CD8-positive, alpha-beta T cell (primary cell): ENCODE measurements at regions of chr11 and their contacts with region 1.

Region 1: GRCh38 chr11:36376888-36377758 is 81.0 kb downstream of the PRR5L start:
- DNase-seq: peak; percentile 21 to 82 (median 53)
- ATAC-seq: peak; percentile 63
- H3K4me3 ChIP-seq: peak overlapping the region; percentile 47 to 85
- H3K4me3 Mint-ChIP-seq: peak overlapping the region; percentile 92
- H3K27ac ChIP-seq: peak overlapping the region; percentile 48 to 76
- H3K27ac Mint-ChIP-seq: peak overlapping the region; percentile 91
- H3K4me1 ChIP-seq: peaks cover 3% of the 10 kb centered on the region
- H3K4me1 Mint-ChIP-seq: peaks cover 37% of the 10 kb centered on the region
- H3K27me3 ChIP-seq: peaks cover 0 to 2% of the 10 kb centered on the region in 2 experiments
- H3K27me3 Mint-ChIP-seq: peaks cover 27% of the 10 kb centered on the region
- CTCF ChIP-seq: peak; percentile 32

Region 2: DNA sequence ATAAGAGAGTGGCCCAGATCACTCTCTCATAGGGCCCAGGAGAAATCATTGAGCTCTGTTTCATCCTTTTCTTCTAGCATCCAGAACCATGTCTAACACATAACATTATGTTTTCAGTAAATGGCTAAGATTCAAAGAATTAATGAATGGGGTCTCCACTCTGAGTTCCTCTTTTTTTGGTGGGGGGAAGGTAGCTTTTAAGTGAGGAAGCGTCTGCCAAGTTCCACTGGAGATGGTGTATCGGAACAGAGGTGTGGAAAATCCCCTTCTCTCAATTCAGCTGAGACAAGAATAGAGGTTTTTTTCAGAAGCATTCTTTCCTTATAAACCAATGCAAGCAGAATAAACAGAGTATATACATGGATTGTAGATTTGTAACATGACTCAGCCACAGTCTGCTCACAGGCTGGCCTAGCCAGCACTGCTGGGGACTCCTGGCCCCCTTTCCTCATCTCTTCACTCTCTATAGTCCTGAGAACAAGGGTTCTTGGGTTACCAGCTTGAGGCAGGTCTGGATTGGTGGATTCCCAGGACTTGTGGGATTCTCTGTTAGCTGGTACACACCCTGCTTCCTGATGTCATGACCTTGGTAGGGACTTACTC is 35.8 kb after region 1 on chr11:
- CTCF ChIA-PET with region 1: no interaction called
- POLR2A ChIA-PET with region 1: interaction called, 3 read pairs
- intact Hi-C with region 1: loop called in 1 of 2 experiments (anchors 2 kb)
- DNase-seq: no peak
- ATAC-seq: no peak
- H3K4me3 ChIP-seq: no peak overlapping the region
- H3K4me3 Mint-ChIP-seq: no peak overlapping the region
- H3K27ac ChIP-seq: peak overlapping the region in 1 of 2 experiments; percentile 71
- H3K27ac Mint-ChIP-seq: peak overlapping the region; percentile 10
- H3K4me1 ChIP-seq: peaks cover 43% of the 10 kb centered on the region
- H3K4me1 Mint-ChIP-seq: peaks cover 58% of the 10 kb centered on the region
- H3K27me3 ChIP-seq: no peaks in the 10 kb centered on the region
- H3K27me3 Mint-ChIP-seq: no peaks in the 10 kb centered on the region
- CTCF ChIP-seq: no peak

Region 3: DNA sequence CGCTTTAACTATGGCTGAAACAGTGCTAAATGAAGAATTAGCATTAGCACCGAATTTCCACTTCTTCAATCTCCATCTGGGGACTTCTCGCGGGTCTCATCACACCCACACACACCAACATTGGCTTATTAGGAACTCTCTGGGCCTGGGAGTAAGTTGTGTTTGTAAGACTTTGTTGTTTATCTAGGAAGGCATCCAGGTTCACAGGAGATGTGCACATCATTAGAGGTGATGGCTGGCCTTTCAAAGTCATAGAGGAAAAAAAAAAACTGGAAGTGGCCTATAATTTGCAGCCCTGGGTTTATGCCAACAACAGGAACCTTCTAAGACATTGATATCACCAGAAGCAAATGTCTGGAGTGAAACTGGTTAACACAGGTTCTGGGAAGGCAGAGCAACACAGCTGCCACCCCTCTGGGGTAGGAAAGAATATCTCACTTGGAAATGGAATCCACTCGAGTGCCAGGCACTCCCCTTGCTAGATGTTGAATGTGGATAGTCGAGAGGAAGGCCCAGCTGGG is 48.5 kb after region 1 on chr11:
- CTCF ChIA-PET with region 1: interaction called, 4 read pairs
- POLR2A ChIA-PET with region 1: interaction called, 14 read pairs
- intact Hi-C with region 1: loop called in 1 of 2 experiments (anchors 2 kb)
- DNase-seq: no peak
- ATAC-seq: no peak
- H3K4me3 ChIP-seq: no peak overlapping the region
- H3K4me3 Mint-ChIP-seq: no peak overlapping the region
- H3K27ac ChIP-seq: peak overlapping the region in 1 of 2 experiments; percentile 55
- H3K27ac Mint-ChIP-seq: peak overlapping the region; percentile 10
- H3K4me1 ChIP-seq: peaks cover 12% of the 10 kb centered on the region
- H3K4me1 Mint-ChIP-seq: peaks cover 28% of the 10 kb centered on the region
- H3K27me3 ChIP-seq: no peaks in the 10 kb centered on the region
- H3K27me3 Mint-ChIP-seq: peaks cover 7% of the 10 kb centered on the region
- CTCF ChIP-seq: no peak

Region 4: GRCh38 chr11:36436064-36436463 is 58.9 kb after region 1 on chr11:
- CTCF ChIA-PET with region 1: no interaction called
- POLR2A ChIA-PET with region 1: no interaction called
- intact Hi-C with region 1: no loop called
- DNase-seq: no peak
- ATAC-seq: no peak
- H3K4me3 ChIP-seq: no peak overlapping the region
- H3K4me3 Mint-ChIP-seq: no peak overlapping the region
- H3K27ac ChIP-seq: no peak overlapping the region
- H3K27ac Mint-ChIP-seq: no peak overlapping the region
- H3K4me1 ChIP-seq: no peaks in the 10 kb centered on the region
- H3K4me1 Mint-ChIP-seq: peaks cover 3% of the 10 kb centered on the region
- H3K27me3 ChIP-seq: no peaks in the 10 kb centered on the region
- H3K27me3 Mint-ChIP-seq: no peaks in the 10 kb centered on the region
- CTCF ChIP-seq: no peak